Transverse colon (tissue), 4 donors: ENCODE measurements at regions of chr4 and their contacts with region 1.

Region 1: GRCh38 chr4:182806259-182807252 is 110.6 kb downstream of the DCTD start:
- DNase-seq: peak; percentile 69
- H3K4me3 ChIP-seq: peak overlapping the region; percentile 26 to 53 (median 37)
- H3K27ac ChIP-seq: peak overlapping the region in 3 of 4 donors; percentile 22 to 49 (median 46)
- H3K4me1 ChIP-seq: no peaks in the 10 kb centered on the region
- H3K27me3 ChIP-seq: peaks cover 9% of the 10 kb centered on the region
- CTCF ChIP-seq: peak; percentile 78 to 87 (median 82)
- EP300 ChIP-seq: no peak
- POLR2A ChIP-seq: no peak

Region 2: DNA sequence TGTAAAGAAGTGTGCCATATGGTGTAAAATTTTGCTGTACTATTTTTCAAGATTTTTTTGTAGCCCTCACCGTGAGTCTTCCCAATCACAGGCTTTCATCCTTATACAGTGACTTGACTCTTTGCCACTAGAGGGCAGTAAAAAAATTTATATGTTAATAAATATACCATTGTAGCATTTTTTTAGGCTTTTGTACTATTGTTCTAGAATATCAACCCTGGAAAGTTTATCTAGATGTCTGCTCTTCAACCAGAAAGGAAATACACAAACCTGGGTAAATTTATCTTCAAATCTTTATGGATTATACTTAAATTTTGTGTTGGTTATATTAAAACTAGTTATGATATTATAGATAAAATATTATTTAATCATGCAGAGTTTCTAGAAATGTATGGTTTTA is 328.1 kb before region 1 on chr4:
- in situ Hi-C with region 1: loop called in 3 of 4 experiments (anchors 10 kb)
- intact Hi-C with region 1: loop called (anchors 10 kb)
- DNase-seq: no peak
- H3K4me3 ChIP-seq: no peak overlapping the region
- H3K27ac ChIP-seq: no peak overlapping the region
- H3K4me1 ChIP-seq: no peaks in the 10 kb centered on the region
- H3K27me3 ChIP-seq: no peaks in the 10 kb centered on the region
- CTCF ChIP-seq: peak; percentile 36 to 69 (median 61)
- EP300 ChIP-seq: no peak
- POLR2A ChIP-seq: no peak

Region 3: DNA sequence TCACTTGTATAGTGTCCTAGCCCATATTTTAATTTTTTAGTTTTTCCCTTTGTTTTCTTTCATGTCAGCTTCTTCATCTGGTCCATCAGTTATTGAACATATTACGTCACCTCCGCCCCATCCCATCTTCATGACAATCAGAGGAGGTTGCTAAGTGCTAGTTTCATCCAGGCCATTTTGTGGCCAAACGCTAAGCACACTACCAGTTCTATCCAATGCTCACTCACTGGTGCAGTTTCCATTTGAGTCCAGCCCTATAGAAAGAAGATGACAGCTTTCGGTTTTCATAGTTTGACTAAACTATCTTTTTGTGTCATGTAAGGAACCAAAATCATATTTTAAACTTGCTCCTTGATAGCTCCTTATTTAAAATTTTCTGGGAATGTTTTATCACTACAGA is 259.1 kb before region 1 on chr4:
- in situ Hi-C with region 1: no loop called
- intact Hi-C with region 1: no loop called
- DNase-seq: no peak
- H3K4me3 ChIP-seq: no peak overlapping the region
- H3K27ac ChIP-seq: no peak overlapping the region
- H3K4me1 ChIP-seq: no peaks in the 10 kb centered on the region
- H3K27me3 ChIP-seq: no peaks in the 10 kb centered on the region
- CTCF ChIP-seq: no peak
- EP300 ChIP-seq: no peak
- POLR2A ChIP-seq: no peak

Region 4: DNA sequence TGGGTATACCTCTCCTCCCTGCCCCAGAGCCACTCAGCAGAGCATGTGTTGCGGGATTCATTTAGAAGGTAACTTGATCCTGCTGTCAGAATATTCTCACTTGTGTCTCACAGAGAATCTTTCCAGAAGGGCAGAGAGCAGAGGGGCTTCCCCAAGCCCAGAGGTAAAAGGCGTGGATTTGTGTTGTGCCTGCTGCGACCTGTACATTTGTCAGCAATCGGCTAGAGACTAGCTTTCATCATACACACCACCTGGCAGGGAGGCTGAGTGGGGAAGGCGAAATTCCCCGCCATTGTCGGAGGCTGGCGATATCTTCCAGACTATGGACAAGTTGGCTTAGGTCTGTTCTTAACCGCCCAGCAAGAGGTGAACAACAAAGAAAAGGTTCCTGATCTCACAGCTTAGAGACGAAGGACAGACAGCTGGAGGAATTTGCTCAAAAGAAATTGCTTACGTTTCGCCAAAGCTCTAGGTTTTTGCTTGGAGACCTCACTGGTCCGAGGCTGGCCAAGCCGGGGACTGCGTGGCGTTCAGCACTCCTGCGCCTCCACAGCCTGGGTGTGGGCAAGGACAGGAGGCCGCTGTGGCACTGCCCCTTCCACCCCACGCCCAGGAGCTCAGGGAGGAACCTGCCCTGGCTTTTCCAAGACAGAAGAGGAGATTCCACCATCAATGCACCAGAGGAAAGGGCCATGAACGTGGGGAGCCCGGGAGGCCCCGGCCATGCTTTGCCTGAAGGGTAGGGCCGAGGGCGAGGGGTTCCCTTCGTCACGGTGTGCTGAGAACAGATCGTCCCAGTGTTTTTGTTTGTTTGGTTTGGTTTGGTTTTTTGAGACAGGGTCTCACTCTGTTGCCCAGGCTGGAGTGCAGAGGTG is 41.3 kb after region 1 on chr4:
- in situ Hi-C with region 1: no loop called
- intact Hi-C with region 1: loop called (anchors 1 kb)
- DNase-seq: no peak
- H3K4me3 ChIP-seq: no peak overlapping the region
- H3K27ac ChIP-seq: no peak overlapping the region
- H3K4me1 ChIP-seq: no peaks in the 10 kb centered on the region
- H3K27me3 ChIP-seq: no peaks in the 10 kb centered on the region
- CTCF ChIP-seq: no peak
- EP300 ChIP-seq: no peak
- POLR2A ChIP-seq: no peak